Activated CD4-positive, alpha-beta T cell treated with anti-CD3 and anti-CD28 coated beads for 36 hours (primary cell): ENCODE measurements at regions of chr1 and their contacts with region 1.

Region 1: DNA sequence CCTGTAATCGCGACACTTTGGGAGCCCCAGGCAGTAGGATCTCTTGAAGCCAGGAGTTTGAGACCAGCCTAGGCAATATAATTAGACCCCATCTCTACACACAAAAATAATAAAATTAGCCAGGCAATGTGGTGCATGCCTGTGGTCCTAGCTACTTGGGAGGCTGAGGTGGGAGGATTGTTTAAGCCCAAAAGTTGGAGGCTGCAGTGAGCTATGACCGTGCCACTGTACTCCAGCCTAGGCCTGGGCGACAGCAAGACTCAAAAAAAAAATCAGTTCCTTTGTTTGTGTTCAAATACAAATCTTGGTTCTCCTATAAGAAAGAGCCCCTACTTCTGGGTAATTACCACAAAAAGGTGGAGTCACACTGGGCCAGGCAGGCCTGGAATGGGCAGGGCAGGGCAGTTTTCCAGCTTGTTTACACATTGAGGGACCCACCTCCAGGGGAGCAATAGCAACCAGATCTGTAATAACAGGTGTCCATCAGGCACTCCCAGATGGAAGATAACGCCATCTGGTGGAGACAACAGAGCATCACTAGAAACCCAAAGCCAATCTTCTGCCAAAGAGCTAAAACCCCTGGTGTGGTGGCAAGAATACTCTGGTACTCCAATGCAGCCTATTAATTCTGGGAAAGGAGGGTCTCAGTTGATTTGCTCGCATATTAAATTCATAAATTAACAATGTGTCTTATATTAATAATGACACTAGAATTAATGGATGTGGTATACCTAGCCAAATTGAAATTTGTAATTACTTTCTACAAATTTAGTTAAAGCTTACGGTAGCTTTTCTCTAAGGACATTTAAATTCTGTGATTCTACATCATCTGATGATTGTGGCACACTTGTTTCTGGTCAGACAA is 13.2 kb downstream of the PPP1R15B start:
- DNase-seq: peak; percentile 70
- ATAC-seq: peak; percentile 95
- H3K4me3 Mint-ChIP-seq: no peak overlapping the region
- H3K27ac Mint-ChIP-seq: peak overlapping the region; percentile 47
- H3K4me1 Mint-ChIP-seq: peaks cover 2% of the 10 kb centered on the region
- H3K27me3 Mint-ChIP-seq: no peaks in the 10 kb centered on the region

Region 2: GRCh38 chr1:204167730-204168129 is 230.7 kb before region 1 on chr1:
- CTCF ChIA-PET with region 1: interaction called, 43 read pairs
- POLR2A ChIA-PET with region 1: interaction called, 3 read pairs
- intact Hi-C with region 1: loop called (anchors 1 kb)
- DNase-seq: no peak
- ATAC-seq: no peak
- H3K4me3 Mint-ChIP-seq: no peak overlapping the region
- H3K27ac Mint-ChIP-seq: no peak overlapping the region
- H3K4me1 Mint-ChIP-seq: no peaks in the 10 kb centered on the region
- H3K27me3 Mint-ChIP-seq: peaks cover 2% of the 10 kb centered on the region

Region 3: GRCh38 chr1:204363335-204364124 is 34.9 kb before region 1 on chr1:
- CTCF ChIA-PET with region 1: interaction called, 39 read pairs
- POLR2A ChIA-PET with region 1: no interaction called
- intact Hi-C with region 1: loop called in 1 of 2 experiments (anchors 2 kb)
- DNase-seq: peak; percentile 87
- ATAC-seq: peak; percentile 81
- H3K4me3 Mint-ChIP-seq: peak overlapping the region; percentile 60
- H3K27ac Mint-ChIP-seq: peak overlapping the region; percentile 85
- H3K4me1 Mint-ChIP-seq: peaks cover 33% of the 10 kb centered on the region
- H3K27me3 Mint-ChIP-seq: peaks cover 2% of the 10 kb centered on the region

Region 4: DNA sequence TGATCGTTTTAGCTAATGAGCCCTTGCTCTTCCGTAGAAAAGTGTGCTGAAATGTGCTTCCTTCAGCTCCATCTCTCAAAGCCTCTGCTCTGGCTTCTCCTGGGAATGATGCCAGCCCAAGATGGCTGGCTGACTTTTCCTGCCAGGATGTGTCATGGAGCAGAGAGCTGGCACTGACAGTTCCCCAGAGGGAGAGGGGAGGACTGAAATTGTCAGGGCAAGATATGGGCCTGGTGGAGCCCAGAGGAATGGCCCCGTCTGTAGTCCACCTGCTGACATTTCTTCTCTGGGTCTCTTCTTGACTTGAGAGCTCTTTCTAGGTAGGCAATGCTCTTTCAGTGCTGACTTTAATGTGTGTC is 13.5 kb before region 1 on chr1:
- CTCF ChIA-PET with region 1: interaction called, 45 read pairs
- POLR2A ChIA-PET with region 1: interaction called, 3 read pairs
- intact Hi-C with region 1: no loop called
- DNase-seq: no peak
- ATAC-seq: no peak
- H3K4me3 Mint-ChIP-seq: no peak overlapping the region
- H3K27ac Mint-ChIP-seq: no peak overlapping the region
- H3K4me1 Mint-ChIP-seq: peaks cover 3% of the 10 kb centered on the region
- H3K27me3 Mint-ChIP-seq: peaks cover under 1% of the 10 kb centered on the region

Region 5: GRCh38 chr1:204438628-204439027 is 40.2 kb after region 1 on chr1:
- CTCF ChIA-PET with region 1: interaction called, 12 read pairs
- POLR2A ChIA-PET with region 1: no interaction called
- intact Hi-C with region 1: no loop called
- DNase-seq: peak; percentile 60
- ATAC-seq: peak; percentile 92
- H3K4me3 Mint-ChIP-seq: no peak overlapping the region
- H3K27ac Mint-ChIP-seq: peak overlapping the region; percentile 58
- H3K4me1 Mint-ChIP-seq: peaks cover 22% of the 10 kb centered on the region
- H3K27me3 Mint-ChIP-seq: no peaks in the 10 kb centered on the region